MCF 10A (cell line): ENCODE measurements at regions of chr12 and their contacts with region 1.

Region 1: GRCh38 chr12:18261253-18261652 is at the start of gene PIK3C2G:
- DNase-seq: peak; percentile 43
- H3K4me3 Mint-ChIP-seq: peak within 1 kb of the TSS; percentile 76
- H3K27ac Mint-ChIP-seq: peak within 1 kb of the TSS; percentile 100
- H3K4me1 Mint-ChIP-seq: peaks cover 40% of the 10 kb centered on the region
- H3K27me3 Mint-ChIP-seq: no peaks in the 10 kb centered on the region
- CTCF ChIP-seq: no peak
- total RNA-seq, gene PIK3C2G: 10.6 and 15.0 TPM in 2 replicates

Region 2: DNA sequence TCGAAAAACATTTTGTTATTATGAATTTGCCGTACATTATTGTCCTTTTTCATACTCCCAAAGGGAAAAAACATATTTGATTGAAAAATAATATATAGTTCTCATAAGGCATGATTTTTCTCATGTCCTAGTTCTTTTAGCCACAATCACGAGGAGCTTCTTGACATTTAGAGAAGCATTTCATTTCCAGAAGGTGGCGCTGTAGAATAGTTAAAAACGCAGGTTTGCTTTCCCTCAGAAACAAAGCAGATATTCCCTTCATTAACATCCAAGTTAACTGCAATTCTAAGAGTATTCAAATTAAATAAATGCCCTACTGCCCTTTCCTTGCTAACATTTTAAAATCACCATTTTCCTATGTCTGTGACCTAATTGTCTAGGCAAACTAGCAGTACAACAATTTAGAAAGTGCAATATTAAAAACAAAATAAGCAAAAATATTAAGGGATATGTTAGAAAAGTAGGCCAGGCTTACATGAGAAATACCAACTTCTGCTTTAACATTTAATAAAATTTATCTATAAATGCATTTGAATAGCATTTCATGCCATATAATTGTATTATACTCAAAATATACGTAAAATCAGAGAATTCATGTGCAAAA is 10.8 kb before region 1 on chr12:
- CTCF ChIA-PET with region 1: interaction called, 10 read pairs
- POLR2A ChIA-PET with region 1: interaction called, 12 read pairs
- intact Hi-C with region 1: no loop called
- DNase-seq: peak; percentile 73
- H3K4me3 Mint-ChIP-seq: no peak overlapping the region
- H3K27ac Mint-ChIP-seq: no peak overlapping the region
- H3K4me1 Mint-ChIP-seq: no peaks in the 10 kb centered on the region
- H3K27me3 Mint-ChIP-seq: no peaks in the 10 kb centered on the region
- CTCF ChIP-seq: peak; percentile 56

Region 3: DNA sequence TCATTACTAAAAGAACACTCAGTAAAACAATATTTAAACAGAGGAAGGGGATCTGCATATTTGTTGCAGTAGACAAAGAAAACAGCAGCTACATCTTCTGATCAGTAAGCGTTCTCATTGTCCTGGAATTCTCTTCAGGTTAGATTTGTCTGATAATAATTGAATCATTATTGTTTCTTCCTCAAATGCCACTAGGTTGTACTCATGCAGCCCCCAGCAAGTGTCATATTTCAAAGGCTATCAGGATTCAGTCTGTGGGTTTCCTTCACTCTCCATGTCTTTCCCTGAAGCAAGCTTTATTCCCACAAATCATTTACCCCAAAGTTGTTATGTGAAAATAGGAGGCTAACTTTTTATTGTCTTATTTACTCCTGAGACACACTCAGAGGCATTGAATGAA is 14.7 kb after region 1 on chr12:
- CTCF ChIA-PET with region 1: interaction called, 3 read pairs
- POLR2A ChIA-PET with region 1: interaction called, 117 read pairs
- intact Hi-C with region 1: no loop called
- DNase-seq: no peak
- H3K4me3 Mint-ChIP-seq: no peak overlapping the region
- H3K27ac Mint-ChIP-seq: peak overlapping the region; percentile 63
- H3K4me1 Mint-ChIP-seq: peaks cover 33% of the 10 kb centered on the region
- H3K27me3 Mint-ChIP-seq: no peaks in the 10 kb centered on the region
- CTCF ChIP-seq: no peak

Region 4: DNA sequence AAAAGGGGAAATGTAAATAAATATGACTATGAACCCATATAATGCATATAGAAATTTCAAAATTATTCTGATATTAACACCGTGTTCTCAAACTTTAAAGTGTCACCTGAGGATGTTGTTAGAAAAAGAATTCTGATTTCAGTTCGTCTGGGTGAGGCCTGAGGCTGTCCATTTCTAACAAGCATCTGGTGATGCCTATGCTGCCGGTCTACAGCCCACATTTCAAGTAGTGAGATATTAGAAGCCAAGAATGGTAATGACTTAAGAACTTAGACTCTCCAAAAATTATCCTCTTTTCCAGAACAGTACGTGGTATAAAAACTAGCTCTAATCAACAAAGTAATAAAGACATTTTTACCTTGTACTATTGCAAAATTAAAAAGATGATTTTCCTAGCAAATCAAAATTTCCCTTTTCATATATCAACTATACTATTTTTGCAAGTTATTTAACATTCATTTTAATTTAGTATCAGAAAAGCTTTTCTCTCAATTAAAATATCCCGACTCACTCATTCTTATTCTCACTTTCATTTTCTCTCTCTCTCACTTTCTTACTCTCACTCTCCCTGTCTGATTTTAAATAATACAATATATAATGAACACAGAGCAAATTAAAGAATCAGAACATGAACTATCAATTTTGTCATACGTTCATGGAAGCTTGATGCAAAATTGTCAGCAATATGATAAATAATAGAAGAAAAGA is 35.1 kb after region 1 on chr12:
- CTCF ChIA-PET with region 1: interaction called, 23 read pairs
- POLR2A ChIA-PET with region 1: interaction called, 443 read pairs
- intact Hi-C with region 1: loop called (anchors 2 kb)
- DNase-seq: peak; percentile 46
- H3K4me3 Mint-ChIP-seq: peak overlapping the region; percentile 77
- H3K27ac Mint-ChIP-seq: peak overlapping the region; percentile 96
- H3K4me1 Mint-ChIP-seq: peaks cover 9% of the 10 kb centered on the region
- H3K27me3 Mint-ChIP-seq: no peaks in the 10 kb centered on the region
- CTCF ChIP-seq: no peak

Region 5: GRCh38 chr12:18313306-18313705 is 52.1 kb after region 1 on chr12:
- CTCF ChIA-PET with region 1: interaction called, 120 read pairs
- POLR2A ChIA-PET with region 1: interaction called, 41 read pairs
- intact Hi-C with region 1: no loop called
- DNase-seq: no peak
- H3K4me3 Mint-ChIP-seq: no peak overlapping the region
- H3K27ac Mint-ChIP-seq: no peak overlapping the region
- H3K4me1 Mint-ChIP-seq: peaks cover 13% of the 10 kb centered on the region
- H3K27me3 Mint-ChIP-seq: no peaks in the 10 kb centered on the region
- CTCF ChIP-seq: no peak

Region 6: DNA sequence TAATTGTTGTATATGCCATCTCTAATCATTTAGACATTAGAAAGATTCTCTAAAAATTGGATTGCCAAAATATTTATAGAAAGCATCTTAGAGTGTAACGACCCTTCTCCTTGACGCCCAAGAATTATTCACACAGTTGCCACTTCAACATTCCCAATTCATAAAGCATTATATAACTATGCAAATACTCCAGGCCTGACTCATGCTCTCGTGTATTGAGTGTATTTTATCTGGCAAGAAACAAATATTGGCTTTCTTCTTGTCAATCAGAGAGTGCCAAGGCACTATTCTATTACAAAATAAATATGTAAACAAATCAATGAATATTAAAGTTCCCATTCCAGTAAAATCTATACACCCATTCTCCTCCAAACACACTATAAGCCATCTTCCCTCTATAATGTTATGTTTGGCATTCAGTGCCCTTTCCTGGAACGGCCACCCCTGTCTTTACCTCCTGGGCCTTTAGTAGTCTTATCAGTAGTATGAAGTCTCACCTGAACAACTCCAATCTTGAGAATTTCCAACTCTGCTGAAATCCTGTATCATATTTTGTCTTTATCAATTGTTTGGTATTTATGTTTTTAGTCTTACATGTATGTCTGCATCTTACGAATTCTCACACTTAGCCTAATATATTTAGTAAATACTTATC is 182.7 kb after region 1 on chr12:
- CTCF ChIA-PET with region 1: no interaction called
- POLR2A ChIA-PET with region 1: no interaction called
- intact Hi-C with region 1: no loop called
- DNase-seq: no peak
- H3K4me3 Mint-ChIP-seq: no peak overlapping the region
- H3K27ac Mint-ChIP-seq: no peak overlapping the region
- H3K4me1 Mint-ChIP-seq: no peaks in the 10 kb centered on the region
- H3K27me3 Mint-ChIP-seq: no peaks in the 10 kb centered on the region
- CTCF ChIP-seq: no peak

Region 7: GRCh38 chr12:19288603-19289244 is 1027.5 kb after region 1 on chr12:
- CTCF ChIA-PET with region 1: no interaction called
- POLR2A ChIA-PET with region 1: no interaction called
- intact Hi-C with region 1: loop called (anchors 10 kb)
- DNase-seq: peak; percentile 46
- H3K4me3 Mint-ChIP-seq: no peak overlapping the region
- H3K27ac Mint-ChIP-seq: no peak overlapping the region
- H3K4me1 Mint-ChIP-seq: no peaks in the 10 kb centered on the region
- H3K27me3 Mint-ChIP-seq: no peaks in the 10 kb centered on the region
- CTCF ChIP-seq: peak; percentile 46